ENCODE measurements at regions of chr19 and their contacts with region 1.

Region 1: DNA sequence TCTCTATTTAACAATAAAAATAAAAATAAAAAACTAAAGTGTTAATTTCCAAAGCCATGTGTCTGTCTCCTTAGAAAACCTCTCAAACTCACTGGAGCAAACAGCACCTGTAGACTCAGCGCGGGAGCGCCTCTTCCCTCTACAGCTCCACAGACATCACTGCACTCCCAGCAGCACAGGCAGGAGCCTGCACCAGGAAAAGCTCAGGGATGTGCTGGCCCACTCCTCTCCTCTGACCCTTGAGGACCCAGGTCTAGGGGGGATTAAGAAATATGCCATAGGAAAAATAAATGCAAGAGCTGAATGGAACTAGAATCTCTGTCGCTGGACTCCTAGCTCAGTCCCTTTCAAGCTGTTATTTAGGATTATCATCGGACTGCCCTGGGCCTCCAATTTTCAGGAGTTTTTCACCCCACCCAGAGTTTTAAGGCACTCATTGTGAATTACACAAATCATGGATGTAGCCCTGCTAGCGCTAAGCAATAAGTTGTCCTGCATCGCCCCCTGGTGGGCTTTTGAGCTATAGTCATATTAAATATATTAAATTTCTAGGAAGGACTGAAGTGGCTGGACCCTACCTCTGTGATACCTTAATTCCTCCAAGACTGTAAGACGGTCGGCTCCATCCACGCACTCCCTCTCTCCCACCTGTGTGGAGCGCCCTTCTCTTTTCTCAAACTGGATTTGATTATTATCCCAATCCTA is 333.9 kb downstream of the UQCRFS1 start:
- DNase-seq: peak; percentile 47 to 75
- ATAC-seq: peak; percentile 47 to 82 (median 54)
- H3K4me3 ChIP-seq: no peak overlapping the region
- H3K4me3 Mint-ChIP-seq: no peak overlapping the region
- H3K27ac ChIP-seq: no peak overlapping the region
- H3K27ac Mint-ChIP-seq: no peak overlapping the region
- H3K4me1 ChIP-seq: no peaks in the 10 kb centered on the region
- H3K4me1 Mint-ChIP-seq: no peaks in the 10 kb centered on the region
- H3K27me3 ChIP-seq: no peaks in the 10 kb centered on the region
- H3K27me3 Mint-ChIP-seq: peaks cover 3 to 9% of the 10 kb centered on the region in 2 donors
- CTCF ChIP-seq: peak; percentile 76

Region 2: GRCh38 chr19:27966390-27966816 is 912.6 kb before region 1 on chr19:
- intact Hi-C with region 1: loop called (anchors 5 kb)
- DNase-seq: peak in 1 of 2 donors; percentile 11
- ATAC-seq: no peak
- H3K4me3 ChIP-seq: no peak overlapping the region
- H3K4me3 Mint-ChIP-seq: no peak overlapping the region
- H3K27ac ChIP-seq: no peak overlapping the region
- H3K27ac Mint-ChIP-seq: no peak overlapping the region
- H3K4me1 ChIP-seq: no peaks in the 10 kb centered on the region
- H3K4me1 Mint-ChIP-seq: no peaks in the 10 kb centered on the region
- H3K27me3 ChIP-seq: no peaks in the 10 kb centered on the region
- H3K27me3 Mint-ChIP-seq: peaks cover 3 to 13% of the 10 kb centered on the region in 2 donors
- CTCF ChIP-seq: peak; percentile 61

Region 3: GRCh38 chr19:28242297-28242927 is 636.6 kb before region 1 on chr19:
- intact Hi-C with region 1: loop called (anchors 1 kb)
- DNase-seq: peak in 1 of 2 donors; percentile 45
- ATAC-seq: peak in 2 of 3 donors; percentile 36 to 74
- H3K4me3 ChIP-seq: no peak overlapping the region
- H3K4me3 Mint-ChIP-seq: no peak overlapping the region
- H3K27ac ChIP-seq: no peak overlapping the region
- H3K27ac Mint-ChIP-seq: no peak overlapping the region
- H3K4me1 ChIP-seq: no peaks in the 10 kb centered on the region
- H3K4me1 Mint-ChIP-seq: no peaks in the 10 kb centered on the region
- H3K27me3 ChIP-seq: no peaks in the 10 kb centered on the region
- H3K27me3 Mint-ChIP-seq: peaks cover 12 to 13% of the 10 kb centered on the region in 2 donors
- CTCF ChIP-seq: peak; percentile 73

Region 4: GRCh38 chr19:28351761-28352160 is 527.3 kb before region 1 on chr19:
- intact Hi-C with region 1: no loop called
- DNase-seq: no peak
- ATAC-seq: no peak
- H3K4me3 ChIP-seq: no peak overlapping the region
- H3K4me3 Mint-ChIP-seq: no peak overlapping the region
- H3K27ac ChIP-seq: no peak overlapping the region
- H3K27ac Mint-ChIP-seq: no peak overlapping the region
- H3K4me1 ChIP-seq: no peaks in the 10 kb centered on the region
- H3K4me1 Mint-ChIP-seq: no peaks in the 10 kb centered on the region
- H3K27me3 ChIP-seq: no peaks in the 10 kb centered on the region
- H3K27me3 Mint-ChIP-seq: peaks cover 3 to 4% of the 10 kb centered on the region in 2 donors
- CTCF ChIP-seq: no peak

Region 5: GRCh38 chr19:28737021-28737895 is 141.8 kb before region 1 on chr19:
- intact Hi-C with region 1: loop called (anchors 5 kb)
- DNase-seq: peak in 1 of 2 donors; percentile 54
- ATAC-seq: peak; percentile 55 to 75 (median 58)
- H3K4me3 ChIP-seq: no peak overlapping the region
- H3K4me3 Mint-ChIP-seq: no peak overlapping the region
- H3K27ac ChIP-seq: peak overlapping the region; percentile 3
- H3K27ac Mint-ChIP-seq: peak overlapping the region in 1 of 2 donors; percentile 58
- H3K4me1 ChIP-seq: peaks cover 4% of the 10 kb centered on the region
- H3K4me1 Mint-ChIP-seq: peaks cover 11 to 12% of the 10 kb centered on the region in 2 donors
- H3K27me3 ChIP-seq: no peaks in the 10 kb centered on the region
- H3K27me3 Mint-ChIP-seq: peaks cover 2 to 20% of the 10 kb centered on the region in 2 donors
- CTCF ChIP-seq: peak; percentile 73

Region 6: GRCh38 chr19:28915737-28916460 is 36.9 kb after region 1 on chr19:
- intact Hi-C with region 1: no loop called
- DNase-seq: no peak
- ATAC-seq: no peak
- H3K4me3 ChIP-seq: no peak overlapping the region
- H3K4me3 Mint-ChIP-seq: no peak overlapping the region
- H3K27ac ChIP-seq: no peak overlapping the region
- H3K27ac Mint-ChIP-seq: no peak overlapping the region
- H3K4me1 ChIP-seq: no peaks in the 10 kb centered on the region
- H3K4me1 Mint-ChIP-seq: no peaks in the 10 kb centered on the region
- H3K27me3 ChIP-seq: no peaks in the 10 kb centered on the region
- H3K27me3 Mint-ChIP-seq: peaks cover 5 to 12% of the 10 kb centered on the region in 2 donors
- CTCF ChIP-seq: no peak